Ascending aorta (tissue), 2 donors: ENCODE measurements at regions of chr1 and their contacts with region 1.

Region 1: GRCh38 chr1:3198371-3199271 is 129.6 kb downstream of the PRDM16 start:
- DNase-seq: no peak
- H3K4me3 ChIP-seq: no peak overlapping the region
- H3K27ac ChIP-seq: peak overlapping the region; percentile 99 to 100
- H3K4me1 ChIP-seq: peaks cover 40 to 69% of the 10 kb centered on the region in 2 donors
- H3K27me3 ChIP-seq: no peaks in the 10 kb centered on the region
- CTCF ChIP-seq: no peak

Region 2: DNA sequence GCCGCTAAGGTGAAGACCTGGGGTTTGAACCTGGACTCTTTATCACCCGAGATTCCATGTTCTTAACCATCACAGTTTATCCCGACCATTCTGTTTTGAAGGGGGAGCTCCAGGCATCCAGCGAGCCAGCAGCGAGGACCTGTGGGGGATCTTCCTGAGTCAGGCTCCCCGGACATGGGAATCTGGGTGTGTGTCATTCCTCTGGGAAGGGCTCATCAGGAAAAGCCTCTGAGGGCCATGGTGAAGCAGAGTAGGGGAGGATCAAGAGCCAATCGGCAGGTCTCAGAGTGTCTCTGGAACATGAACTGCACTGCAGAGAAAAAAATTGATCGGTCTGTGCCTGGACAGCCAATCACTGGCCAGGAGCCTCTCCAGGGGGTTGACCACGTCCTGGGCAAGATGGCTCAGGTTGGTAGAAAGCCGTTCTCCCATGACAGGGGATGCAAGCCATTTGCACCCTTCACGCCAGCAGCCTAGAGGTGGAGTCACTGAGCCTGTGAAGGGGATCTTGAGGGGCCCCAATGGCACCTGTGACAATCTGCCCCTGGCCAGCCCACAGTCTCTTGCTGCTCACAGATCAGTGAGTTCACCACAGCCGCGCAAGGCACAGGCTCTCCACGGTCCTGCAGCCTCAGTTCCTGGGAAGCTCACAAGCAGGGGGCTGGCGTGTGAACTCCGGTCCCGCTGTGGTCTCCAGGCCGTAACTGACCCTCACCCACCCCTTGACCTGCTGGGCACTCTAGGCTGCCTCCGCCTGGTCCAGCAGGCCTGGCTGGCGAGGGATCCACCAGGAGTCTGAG is 197.8 kb before region 1 on chr1:
- intact Hi-C with region 1: no loop called
- DNase-seq: peak in 1 of 2 donors; percentile 61
- H3K4me3 ChIP-seq: no peak overlapping the region
- H3K27ac ChIP-seq: peak overlapping the region in 1 of 2 donors; percentile 78
- H3K4me1 ChIP-seq: peaks cover 13 to 39% of the 10 kb centered on the region in 2 donors
- H3K27me3 ChIP-seq: no peaks in the 10 kb centered on the region
- CTCF ChIP-seq: no peak

Region 3: GRCh38 chr1:3161176-3161840 is 37.3 kb before region 1 on chr1:
- intact Hi-C with region 1: no loop called
- DNase-seq: no peak
- H3K4me3 ChIP-seq: peak overlapping the region; percentile 14 to 28
- H3K27ac ChIP-seq: peak overlapping the region; percentile 75 to 79
- H3K4me1 ChIP-seq: peaks cover 5 to 38% of the 10 kb centered on the region in 2 donors
- H3K27me3 ChIP-seq: no peaks in the 10 kb centered on the region
- CTCF ChIP-seq: no peak

Region 4: GRCh38 chr1:3237994-3238702 is 39.5 kb after region 1 on chr1:
- intact Hi-C with region 1: loop called (anchors 5 kb)
- DNase-seq: peak in 1 of 2 donors; percentile 82
- H3K4me3 ChIP-seq: peak overlapping the region in 1 of 2 donors; percentile 35
- H3K27ac ChIP-seq: peak overlapping the region; percentile 73 to 83
- H3K4me1 ChIP-seq: peaks cover 6 to 38% of the 10 kb centered on the region in 2 donors
- H3K27me3 ChIP-seq: no peaks in the 10 kb centered on the region
- CTCF ChIP-seq: no peak